ENCODE measurements at regions of chr1 and their contacts with region 1.

Region 1: DNA sequence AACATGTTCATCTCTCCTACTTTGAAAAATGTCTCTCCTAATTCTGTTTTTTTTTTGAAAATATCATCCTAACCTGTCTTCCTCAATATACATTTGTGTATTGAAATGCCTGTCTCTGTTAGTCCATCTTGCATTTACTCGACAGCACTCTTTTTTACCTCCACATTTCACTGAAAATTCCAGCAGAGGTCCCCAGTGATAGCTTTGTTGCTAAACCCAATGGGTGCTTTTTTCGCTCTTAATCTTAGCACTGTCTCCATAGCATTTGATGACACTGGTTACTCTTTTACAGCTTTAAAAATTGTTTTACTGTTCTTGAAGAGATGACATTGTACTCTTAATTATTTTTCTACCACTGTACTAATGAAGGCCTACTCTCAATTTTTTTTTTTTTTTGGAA is 10.8 kb downstream of the OSBPL9 start:
- DNase-seq: no peak
- ATAC-seq: peak; percentile 44 to 61

Region 2: GRCh38 chr1:51666478-51666877 is 38.8 kb after region 1 on chr1:
- intact Hi-C with region 1: no loop called
- DNase-seq: no peak
- ATAC-seq: peak; percentile 39 to 85

Region 3: GRCh38 chr1:51768971-51769588 is 141.4 kb after region 1 on chr1:
- intact Hi-C with region 1: loop called in 1 of 2 experiments (anchors 5 kb)
- DNase-seq: no peak
- ATAC-seq: peak; percentile 76 to 77

Measured in left cardiac atrium (tissue), 4 donors.